ENCODE measurements at regions of chr7 and their contacts with region 1.

Region 1: DNA sequence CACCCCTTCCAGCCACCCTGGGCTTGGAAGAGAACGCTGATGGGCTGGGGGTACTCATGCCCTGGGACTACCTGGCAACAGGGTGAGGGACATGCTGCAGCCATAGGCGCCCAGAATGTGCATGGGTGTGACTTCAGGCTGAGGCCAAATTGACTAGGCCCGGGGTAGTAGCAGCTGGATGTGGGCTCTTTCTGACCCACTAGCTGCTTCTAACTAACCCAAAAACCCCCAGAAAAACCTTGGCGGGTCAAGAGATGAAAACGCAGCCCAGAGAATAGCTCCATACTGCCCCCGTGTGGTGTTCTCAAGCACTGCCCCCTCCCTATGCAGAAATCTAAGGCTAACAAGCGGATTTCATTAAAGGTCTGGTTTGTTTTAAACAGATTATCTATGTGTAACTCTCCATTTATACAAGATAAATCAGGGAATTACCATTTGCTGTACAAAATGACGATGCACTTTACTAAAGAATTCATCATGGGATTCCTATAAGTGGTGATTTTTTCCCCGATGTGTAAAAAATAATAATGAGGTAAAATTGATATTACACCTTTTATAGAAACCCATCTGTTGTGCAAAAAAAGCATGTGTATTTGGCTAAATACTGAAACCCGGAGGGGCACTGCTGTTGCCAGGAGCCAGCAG is 4.2 kb downstream of the SMARCD3 start:
- DNase-seq: no peak
- ATAC-seq: no peak
- H3K4me3 ChIP-seq: peak overlapping the region in 1 of 10 donors; percentile 38
- H3K27ac ChIP-seq: peak overlapping the region in 1 of 10 donors; percentile 35
- H3K4me1 ChIP-seq: peaks cover 16 to 79% (median 61%) of the 10 kb centered on the region in 9 donors
- H3K27me3 ChIP-seq: peaks cover 0 to 47% (median 6%) of the 10 kb centered on the region in 7 donors
- CTCF ChIP-seq: peak; percentile 68 to 90 (median 86)

Region 2: DNA sequence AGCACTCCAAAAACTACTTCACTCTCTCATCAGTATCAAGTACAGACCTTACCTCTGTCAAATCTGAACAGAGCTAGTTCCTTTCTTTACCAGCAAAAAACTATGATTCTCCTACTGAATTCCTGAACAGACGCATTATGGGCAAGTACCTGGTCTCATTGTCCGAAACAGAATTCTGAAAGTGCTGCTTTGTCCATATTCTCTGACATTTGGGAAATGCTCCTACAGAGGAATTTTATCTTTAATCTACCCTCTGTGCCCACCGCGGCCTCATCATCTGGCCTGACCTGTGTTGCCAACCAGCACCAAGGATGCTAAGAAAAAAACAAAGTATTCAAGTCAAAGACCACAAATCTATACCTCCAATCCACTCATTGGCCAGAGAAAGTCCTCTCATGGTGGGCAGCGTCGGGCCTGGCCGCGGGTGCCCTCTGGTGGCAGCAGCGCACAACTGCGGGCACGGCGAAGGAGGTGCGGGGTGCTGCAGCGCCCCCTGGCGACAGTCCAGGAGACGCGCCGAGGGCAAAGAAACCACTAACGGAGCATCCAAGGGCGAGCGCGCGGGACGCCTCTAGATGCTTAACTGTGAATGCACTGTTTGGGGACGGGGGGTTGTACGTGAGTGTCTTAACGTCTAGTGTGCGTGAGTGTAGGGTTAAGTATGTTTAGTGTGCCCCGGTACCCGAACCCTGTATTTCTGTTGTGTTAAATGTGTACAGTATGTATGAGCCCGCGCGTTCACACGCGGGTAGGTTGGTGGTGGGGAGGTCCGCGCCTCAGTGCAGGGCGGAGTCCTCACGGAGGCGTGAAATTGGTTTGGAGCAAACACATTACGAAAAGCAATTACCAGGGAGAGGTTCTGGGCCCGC is 71.8 kb before region 1 on chr7:
- intact Hi-C with region 1: loop called in 3 of 10 experiments (anchors 5 kb)
- DNase-seq: peak; percentile 62 to 82
- ATAC-seq: peak; percentile 59 to 79 (median 71)
- H3K4me3 ChIP-seq: no peak overlapping the region
- H3K27ac ChIP-seq: no peak overlapping the region
- H3K4me1 ChIP-seq: peaks cover 0 to 21% (median 4%) of the 10 kb centered on the region in 9 donors
- H3K27me3 ChIP-seq: peaks cover 4 to 78% (median 47%) of the 10 kb centered on the region in 7 donors
- CTCF ChIP-seq: peak; percentile 100

Region 3: DNA sequence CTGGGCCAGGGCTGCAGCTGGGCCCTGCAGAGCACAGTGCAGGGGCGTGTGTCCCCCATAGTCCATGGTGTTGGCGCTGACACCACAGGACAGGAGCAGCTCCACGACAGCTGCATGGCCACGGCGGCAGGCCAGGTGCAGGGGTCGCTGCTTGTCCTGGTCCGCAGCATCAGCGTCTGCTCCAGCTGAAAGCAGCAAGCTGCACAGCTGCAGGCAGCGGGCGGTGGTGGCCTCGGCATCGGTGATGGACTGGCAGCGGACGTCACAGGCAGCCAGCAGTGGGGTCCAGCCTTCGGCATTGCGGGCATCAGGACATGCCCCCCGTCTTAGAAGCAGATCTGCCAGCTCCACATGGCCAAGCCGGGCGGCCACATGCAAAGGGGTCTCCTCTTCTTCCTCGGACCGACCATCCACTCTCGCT is 63.3 kb before region 1 on chr7:
- intact Hi-C with region 1: loop called in 2 of 10 experiments (anchors 5 to 10 kb)
- DNase-seq: no peak
- ATAC-seq: peak in 1 of 8 donors; percentile 17
- H3K4me3 ChIP-seq: no peak overlapping the region
- H3K27ac ChIP-seq: no peak overlapping the region
- H3K4me1 ChIP-seq: peaks cover 0 to 12% (median 0%) of the 10 kb centered on the region in 9 donors
- H3K27me3 ChIP-seq: peaks cover 0 to 6% (median 2%) of the 10 kb centered on the region in 7 donors
- CTCF ChIP-seq: no peak

Region 4: GRCh38 chr7:151291206-151291605 is 46.9 kb after region 1 on chr7:
- intact Hi-C with region 1: no loop called
- DNase-seq: no peak
- ATAC-seq: no peak
- H3K4me3 ChIP-seq: no peak overlapping the region
- H3K27ac ChIP-seq: no peak overlapping the region
- H3K4me1 ChIP-seq: no peaks in the 10 kb centered on the region
- H3K27me3 ChIP-seq: peaks cover 0 to 16% (median 6%) of the 10 kb centered on the region in 7 donors
- CTCF ChIP-seq: no peak

Region 5: DNA sequence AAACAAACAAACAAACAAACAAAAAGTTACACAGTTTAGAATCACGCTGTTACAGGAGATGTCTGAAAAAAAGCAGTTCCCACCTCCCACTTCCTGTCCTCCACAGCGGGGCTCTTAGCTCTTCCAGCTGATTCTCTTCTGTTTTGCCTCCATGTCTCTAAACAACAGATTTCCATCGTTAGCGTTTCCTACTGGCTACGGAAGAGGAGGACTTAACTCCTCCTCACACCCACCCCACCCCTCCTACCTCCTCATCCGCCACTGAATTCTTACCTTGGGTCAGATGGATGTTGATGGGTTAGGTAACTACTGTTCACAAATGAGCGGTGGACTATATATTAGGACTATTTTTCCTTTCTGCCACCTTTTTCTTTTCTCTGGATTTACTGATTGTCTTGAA is 60.5 kb after region 1 on chr7:
- intact Hi-C with region 1: loop called in 8 of 10 experiments (anchors 1 to 5 kb)
- DNase-seq: no peak
- ATAC-seq: no peak
- H3K4me3 ChIP-seq: peak overlapping the region in 2 of 10 donors; percentile 7 to 31
- H3K27ac ChIP-seq: no peak overlapping the region
- H3K4me1 ChIP-seq: peaks cover 3 to 17% (median 11%) of the 10 kb centered on the region in 9 donors
- H3K27me3 ChIP-seq: peaks cover 0 to 61% (median 39%) of the 10 kb centered on the region in 7 donors
- CTCF ChIP-seq: no peak

Measured in heart right ventricle (tissue), 16 donors.